Sigmoid colon (tissue), 7 donors: ENCODE measurements at regions of chr3 and their contacts with region 1.

Region 1: DNA sequence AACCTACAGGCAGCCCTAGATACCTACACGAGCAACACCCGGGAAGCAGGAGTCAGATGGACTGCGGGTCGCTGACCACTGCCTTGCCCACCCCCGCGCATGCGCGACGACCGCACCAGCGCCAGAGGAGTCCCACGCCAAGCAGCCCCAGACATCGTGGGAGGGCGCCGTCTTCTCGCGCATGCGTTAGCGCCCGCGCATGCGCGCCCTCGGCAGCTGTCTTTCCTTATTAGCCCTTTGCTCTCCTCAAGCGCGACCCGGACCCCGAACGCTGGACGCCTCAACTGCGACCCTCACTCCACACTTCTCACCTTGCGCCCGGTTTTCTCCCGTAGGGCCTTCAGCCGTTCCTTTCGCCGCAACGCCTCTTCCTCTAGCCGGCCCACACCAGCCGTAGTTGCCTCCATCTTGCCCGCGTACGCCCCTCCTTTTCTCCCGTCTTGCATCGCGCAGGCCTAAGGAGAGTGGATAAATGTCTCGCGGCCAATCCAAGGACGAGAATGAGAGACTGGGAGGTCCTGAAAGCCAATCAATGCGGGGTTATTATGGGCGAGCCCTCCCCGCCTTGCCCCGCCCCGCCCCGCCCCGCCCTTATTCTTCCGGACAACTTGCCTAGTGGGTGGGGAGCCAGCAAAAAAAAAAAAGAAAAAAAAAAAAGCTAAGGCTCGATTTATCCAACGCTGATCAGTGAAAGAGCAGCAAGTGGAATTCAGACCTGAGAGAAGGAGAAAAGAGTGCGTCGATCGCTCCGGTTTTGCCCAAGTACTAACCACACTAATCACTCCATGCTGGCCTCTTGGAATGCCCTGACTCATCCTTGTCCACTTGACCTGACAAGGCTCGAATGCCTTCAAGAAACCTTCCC is at the start of gene CCDC12:
- DNase-seq: peak; percentile 99
- H3K4me3 ChIP-seq: peak within 1 kb of the TSS; percentile 47 to 86 (median 80)
- H3K27ac ChIP-seq: peak within 1 kb of the TSS; percentile 91 to 95 (median 94)
- H3K4me1 ChIP-seq: peaks cover 0 to 71% (median 56%) of the 10 kb centered on the region in 4 donors
- H3K27me3 ChIP-seq: no peaks in the 10 kb centered on the region
- CTCF ChIP-seq: no peak
- EP300 ChIP-seq: no peak
- POLR2A ChIP-seq: peak; percentile 80 to 95
- total RNA-seq, gene CCDC12: 33.1 to 41.0 (median 36.6) TPM

Region 2: DNA sequence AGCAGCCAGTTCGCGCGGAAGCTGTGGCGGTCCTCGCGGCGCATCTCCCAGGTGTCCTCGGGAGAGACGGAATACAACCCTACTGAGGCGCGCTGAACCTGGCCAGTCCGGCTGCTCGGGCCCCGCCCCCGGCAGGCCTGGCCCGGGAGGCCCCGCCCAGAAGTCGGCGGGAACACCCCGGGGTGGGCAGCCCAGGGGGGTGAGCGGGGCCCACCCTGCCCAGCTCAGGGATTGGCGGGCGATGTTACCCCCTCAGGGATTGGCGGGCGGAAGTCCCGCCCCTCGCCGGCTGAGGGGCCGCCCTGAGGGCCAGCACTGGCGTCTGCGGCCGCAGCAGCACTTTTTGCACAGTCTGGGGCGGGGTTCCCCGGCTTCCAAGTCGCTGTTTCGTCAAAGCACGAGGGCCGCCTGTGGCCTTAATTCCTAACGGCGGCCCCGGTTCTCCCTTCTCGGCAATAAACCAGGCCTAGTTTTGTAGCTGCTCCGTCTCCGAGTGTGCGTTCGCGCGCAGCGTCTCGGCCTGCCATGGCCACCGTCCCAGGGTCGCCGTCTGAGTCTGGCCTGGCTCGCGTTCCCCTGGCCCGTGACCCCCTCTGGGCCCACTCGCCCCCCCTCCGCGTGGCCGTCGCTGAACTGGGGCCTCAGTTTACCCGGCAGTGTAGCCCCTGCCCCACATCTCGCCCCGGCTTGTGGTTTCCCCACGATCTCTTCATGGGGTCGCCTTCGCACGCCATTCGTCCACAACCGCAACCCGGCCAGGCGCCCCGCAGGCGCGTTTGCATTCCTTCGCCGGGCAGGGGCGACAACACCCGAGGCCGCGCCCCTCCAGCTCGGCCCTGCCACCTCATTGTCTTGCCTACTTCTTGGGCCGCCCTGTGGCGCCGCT is 32.9 kb after region 1 on chr3:
- intact Hi-C with region 1: loop called (anchors 2 kb)
- DNase-seq: peak; percentile 97
- H3K4me3 ChIP-seq: peak overlapping the region; percentile 55 to 67 (median 57)
- H3K27ac ChIP-seq: peak overlapping the region; percentile 86 to 93 (median 90)
- H3K4me1 ChIP-seq: peaks cover 0 to 15% (median 9%) of the 10 kb centered on the region in 4 donors
- H3K27me3 ChIP-seq: no peaks in the 10 kb centered on the region
- CTCF ChIP-seq: no peak
- EP300 ChIP-seq: no peak
- POLR2A ChIP-seq: peak; percentile 85 to 87

Region 3: DNA sequence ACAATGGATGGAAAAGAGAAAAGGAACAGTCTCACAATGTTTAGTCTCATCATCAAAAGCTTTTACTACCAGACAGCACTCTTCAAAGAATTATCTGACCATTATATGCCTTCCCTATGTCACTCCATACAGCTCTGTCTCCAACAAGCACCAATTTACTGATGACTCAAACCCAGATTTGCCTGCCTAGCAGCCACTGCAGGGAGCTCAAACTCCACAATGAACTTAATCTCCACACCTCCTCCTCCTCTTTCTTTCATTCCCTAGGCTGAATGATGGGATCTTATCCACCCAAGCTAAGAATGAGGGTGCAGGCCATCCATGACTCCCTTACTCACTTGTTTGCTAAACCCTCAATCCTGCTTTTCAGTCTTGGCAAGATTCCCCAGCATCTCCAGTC is 48.4 kb after region 1 on chr3:
- intact Hi-C with region 1: no loop called
- DNase-seq: no peak
- H3K4me3 ChIP-seq: no peak overlapping the region
- H3K27ac ChIP-seq: no peak overlapping the region
- H3K4me1 ChIP-seq: peaks cover 0 to 31% (median 28%) of the 10 kb centered on the region in 4 donors
- H3K27me3 ChIP-seq: no peaks in the 10 kb centered on the region
- CTCF ChIP-seq: no peak
- EP300 ChIP-seq: no peak
- POLR2A ChIP-seq: no peak